Transverse colon (tissue), 4 donors: ENCODE measurements at regions of chr10 and their contacts with region 1.

Region 1: GRCh38 chr10:102927311-102928010 is 9.4 kb downstream of the CNNM2 start:
- DNase-seq: peak; percentile 39
- H3K4me3 ChIP-seq: no peak overlapping the region
- H3K27ac ChIP-seq: peak overlapping the region in 3 of 4 donors; percentile 24 to 59 (median 38)
- H3K4me1 ChIP-seq: peaks cover 0 to 34% (median 15%) of the 10 kb centered on the region in 4 donors
- H3K27me3 ChIP-seq: no peaks in the 10 kb centered on the region
- CTCF ChIP-seq: no peak
- EP300 ChIP-seq: no peak
- POLR2A ChIP-seq: no peak

Region 2: GRCh38 chr10:101682172-101682825 is 1245.2 kb before region 1 on chr10:
- in situ Hi-C with region 1: no loop called
- intact Hi-C with region 1: no loop called
- DNase-seq: no peak
- H3K4me3 ChIP-seq: peak overlapping the region in 1 of 4 donors; percentile 22
- H3K27ac ChIP-seq: peak overlapping the region in 3 of 4 donors; percentile 14 to 31 (median 28)
- H3K4me1 ChIP-seq: peaks cover 0 to 20% (median 9%) of the 10 kb centered on the region in 4 donors
- H3K27me3 ChIP-seq: no peaks in the 10 kb centered on the region
- CTCF ChIP-seq: no peak
- EP300 ChIP-seq: no peak
- POLR2A ChIP-seq: no peak

Region 3: GRCh38 chr10:102211615-102212299 is 715.7 kb before region 1 on chr10:
- in situ Hi-C with region 1: no loop called
- intact Hi-C with region 1: no loop called
- DNase-seq: no peak
- H3K4me3 ChIP-seq: no peak overlapping the region
- H3K27ac ChIP-seq: no peak overlapping the region
- H3K4me1 ChIP-seq: peaks cover 0 to 4% (median 0%) of the 10 kb centered on the region in 4 donors
- H3K27me3 ChIP-seq: no peaks in the 10 kb centered on the region
- CTCF ChIP-seq: no peak
- EP300 ChIP-seq: no peak
- POLR2A ChIP-seq: no peak

Region 4: GRCh38 chr10:103053659-103054581 is 126.5 kb after region 1 on chr10:
- in situ Hi-C with region 1: loop called in 1 of 4 experiments (anchors 10 kb)
- intact Hi-C with region 1: no loop called
- DNase-seq: peak; percentile 51
- H3K4me3 ChIP-seq: peak overlapping the region in 2 of 4 donors; percentile 11 to 27
- H3K27ac ChIP-seq: peak overlapping the region in 3 of 4 donors; percentile 34 to 70 (median 45)
- H3K4me1 ChIP-seq: peaks cover 0 to 6% (median 0%) of the 10 kb centered on the region in 4 donors
- H3K27me3 ChIP-seq: no peaks in the 10 kb centered on the region
- CTCF ChIP-seq: peak in 1 of 5 experiments; percentile 22
- EP300 ChIP-seq: no peak
- POLR2A ChIP-seq: no peak